Prostate gland (tissue), 2 donors: ENCODE measurements at regions of chr11 and their contacts with region 1.

Region 1: DNA sequence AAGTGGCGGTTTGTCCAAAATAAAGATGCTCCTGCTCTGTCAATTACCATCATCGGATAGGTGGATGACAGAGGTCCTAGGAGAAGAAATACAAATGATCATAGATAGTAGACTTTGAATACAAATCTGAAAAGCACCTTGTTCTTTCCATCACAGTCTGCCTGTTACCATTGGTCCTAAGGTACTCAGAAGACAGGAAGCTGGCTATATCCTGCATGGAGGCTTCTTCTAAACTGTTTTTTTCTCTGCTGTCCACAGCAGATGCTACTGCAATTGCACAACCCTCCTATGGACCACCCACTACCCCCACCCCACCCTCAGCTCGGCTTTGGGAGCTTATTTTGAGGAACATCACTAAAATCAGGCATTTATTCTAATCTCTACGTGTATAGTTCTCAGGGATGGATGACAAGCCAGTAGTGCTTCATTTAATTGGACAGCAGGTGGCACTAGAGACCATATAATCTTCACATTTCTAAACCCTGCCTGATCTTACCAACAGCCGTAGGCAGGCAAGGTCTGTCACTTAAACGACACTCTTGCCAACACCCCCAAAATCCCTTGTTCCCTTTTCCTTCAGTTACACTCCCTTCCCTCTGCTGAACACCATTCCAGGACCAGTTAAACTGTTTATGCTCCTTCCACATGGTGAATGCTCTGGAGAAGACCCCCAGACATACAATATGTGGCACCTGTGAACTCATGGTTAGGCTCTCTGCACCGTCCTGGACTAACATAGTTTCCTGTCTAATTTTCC is 6.6 kb upstream of the PTS start:
- DNase-seq: peak; percentile 58
- H3K4me3 ChIP-seq: no peak overlapping the region
- H3K27ac ChIP-seq: no peak overlapping the region
- H3K4me1 ChIP-seq: no peaks in the 10 kb centered on the region
- H3K27me3 ChIP-seq: no peaks in the 10 kb centered on the region
- CTCF ChIP-seq: peak; percentile 22 to 91 (median 86)
- POLR2A ChIP-seq: no peak

Region 2: GRCh38 chr11:112280268-112281126 is 60.8 kb after region 1 on chr11:
- intact Hi-C with region 1: loop called (anchors 2 kb)
- DNase-seq: peak; percentile 68
- H3K4me3 ChIP-seq: peak overlapping the region; percentile 24 to 28
- H3K27ac ChIP-seq: peak overlapping the region; percentile 14 to 38
- H3K4me1 ChIP-seq: no peaks in the 10 kb centered on the region
- H3K27me3 ChIP-seq: no peaks in the 10 kb centered on the region
- CTCF ChIP-seq: peak; percentile 52 to 76 (median 62)
- POLR2A ChIP-seq: no peak

Region 3: GRCh38 chr11:113289431-113290187 is 1070.0 kb after region 1 on chr11:
- intact Hi-C with region 1: loop called (anchors 10 kb)
- DNase-seq: peak; percentile 27
- H3K4me3 ChIP-seq: no peak overlapping the region
- H3K27ac ChIP-seq: no peak overlapping the region
- H3K4me1 ChIP-seq: no peaks in the 10 kb centered on the region
- H3K27me3 ChIP-seq: no peaks in the 10 kb centered on the region
- CTCF ChIP-seq: peak; percentile 71 to 85 (median 81)
- POLR2A ChIP-seq: no peak